HCT116 (cell line): ENCODE measurements at regions of chr1 and their contacts with region 1.

Region 1: DNA sequence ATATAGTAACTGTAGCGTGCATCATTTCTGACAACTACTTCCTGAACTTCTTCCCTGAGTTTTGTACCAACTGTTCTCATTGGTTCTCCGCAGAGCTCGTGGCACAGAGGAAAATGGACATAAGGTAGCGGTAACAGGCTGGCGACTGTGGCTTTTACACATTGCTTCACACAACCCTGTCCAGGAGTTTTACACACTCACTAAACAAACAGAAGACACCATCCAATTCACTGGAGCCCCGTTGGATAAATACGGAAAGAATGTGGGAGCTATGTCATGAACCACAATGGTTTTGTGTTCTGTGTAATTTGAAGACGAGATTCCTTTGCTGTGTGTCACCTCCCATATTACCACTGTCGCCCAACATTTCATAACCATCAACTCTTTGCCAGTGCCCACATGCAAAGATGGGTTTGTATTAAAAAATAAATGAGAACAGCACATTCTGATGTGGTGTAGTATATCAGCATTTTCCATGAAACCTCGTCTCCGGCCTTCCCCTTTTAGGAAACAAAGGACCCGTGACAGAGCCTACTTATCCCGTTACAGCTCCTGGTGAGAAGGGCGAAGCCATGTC is 47.3 kb upstream of the ENAH start:
- DNase-seq: peak; percentile 88
- ATAC-seq: peak; percentile 85
- H3K4me3 ChIP-seq: peak overlapping the region; percentile 10 to 37
- H3K27ac ChIP-seq: peak overlapping the region; percentile 73
- H3K4me1 ChIP-seq: peaks cover 27 to 33% of the 10 kb centered on the region in 2 experiments
- H3K27me3 ChIP-seq: no peaks in the 10 kb centered on the region
- CTCF ChIP-seq: no peak
- POLR2A ChIP-seq: no peak
- RAD21 ChIP-seq: peak; percentile 27

Region 2: DNA sequence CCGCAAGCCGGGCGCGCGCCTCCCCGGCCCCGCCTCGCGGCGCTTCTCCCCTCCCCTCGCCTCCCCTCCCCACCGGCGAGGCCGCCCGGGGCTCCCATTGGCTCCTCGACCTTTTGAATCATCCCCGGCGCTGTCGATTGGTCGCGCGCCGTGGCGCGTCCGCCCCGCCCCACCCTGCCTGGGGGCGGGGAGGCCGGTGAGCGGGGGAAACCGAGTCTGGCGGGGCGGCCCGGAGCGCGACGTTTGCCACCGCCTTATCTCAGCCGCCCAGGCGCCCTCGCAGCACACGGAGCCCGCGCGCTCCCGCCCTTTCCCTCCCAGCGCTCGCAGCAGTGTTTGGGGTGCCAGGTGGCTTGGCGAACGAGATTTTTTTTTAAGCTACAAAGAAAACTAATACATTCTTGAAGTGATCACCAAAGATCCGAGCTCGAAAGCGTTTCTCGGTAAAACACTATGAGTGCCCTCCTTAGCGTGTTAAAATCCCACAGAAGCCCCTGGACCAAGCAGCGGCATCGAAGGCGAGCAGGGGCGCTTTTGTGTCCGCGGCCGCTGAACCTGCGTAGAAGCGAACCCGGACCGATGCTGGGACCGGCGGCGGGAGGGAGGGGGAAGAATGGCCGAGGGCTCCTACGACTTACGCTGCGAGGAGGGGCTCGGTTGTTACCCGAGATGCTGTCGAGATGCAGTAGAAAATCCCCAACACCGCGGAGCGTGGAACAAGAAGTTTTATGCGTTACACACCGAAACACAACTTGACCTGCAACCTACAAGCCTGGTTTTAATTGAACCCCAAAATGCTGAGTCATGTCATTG is 272.0 kb before region 1 on chr1:
- CTCF ChIA-PET with region 1: no interaction called
- POLR2A ChIA-PET with region 1: no interaction called
- RAD21 ChIA-PET with region 1: no interaction called
- intact Hi-C with region 1: no loop called
- DNase-seq: peak; percentile 66
- ATAC-seq: peak; percentile 91
- H3K4me3 ChIP-seq: peak overlapping the region; percentile 85 to 91
- H3K27ac ChIP-seq: peak overlapping the region; percentile 91
- H3K4me1 ChIP-seq: peaks cover 27 to 45% of the 10 kb centered on the region in 2 experiments
- H3K27me3 ChIP-seq: no peaks in the 10 kb centered on the region
- CTCF ChIP-seq: no peak
- POLR2A ChIP-seq: peak; percentile 37
- RAD21 ChIP-seq: no peak

Region 3: DNA sequence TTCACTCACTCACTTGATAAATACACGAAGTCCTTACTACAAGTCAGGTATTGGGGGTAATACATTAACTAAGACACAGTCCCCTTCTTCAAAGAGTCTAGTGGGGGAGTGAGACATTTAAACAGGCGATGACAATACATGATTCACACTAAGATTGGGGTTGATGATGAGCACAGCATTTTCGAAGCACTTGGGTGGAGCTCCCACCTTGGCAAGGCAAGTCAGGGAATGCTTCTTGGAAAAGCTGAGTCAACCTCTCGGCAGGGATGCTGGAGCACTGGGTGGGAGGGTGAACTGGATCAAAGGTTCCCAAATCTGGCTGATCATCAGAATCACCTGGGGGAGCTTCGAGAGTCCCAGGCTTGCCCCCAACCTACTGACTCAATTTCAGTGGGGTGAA is 10.6 kb after region 1 on chr1:
- CTCF ChIA-PET with region 1: interaction called, 5 read pairs
- POLR2A ChIA-PET with region 1: interaction called, 12 read pairs
- RAD21 ChIA-PET with region 1: no interaction called
- intact Hi-C with region 1: no loop called
- DNase-seq: peak; percentile 82
- ATAC-seq: peak; percentile 89
- H3K4me3 ChIP-seq: no peak overlapping the region
- H3K27ac ChIP-seq: no peak overlapping the region
- H3K4me1 ChIP-seq: peaks cover 9 to 27% of the 10 kb centered on the region in 2 experiments
- H3K27me3 ChIP-seq: no peaks in the 10 kb centered on the region
- CTCF ChIP-seq: no peak
- POLR2A ChIP-seq: no peak
- RAD21 ChIP-seq: no peak; the same call in 1 of the 2 replicates